ENCODE measurements at regions of chr13 and their contacts with region 1.

Region 1: GRCh38 chr13:97879646-97880310 is 73.7 kb upstream of the IPO5 start:
- DNase-seq: peak; percentile 72
- H3K4me3 ChIP-seq: no peak overlapping the region
- H3K27ac ChIP-seq: peak overlapping the region; percentile 91
- H3K4me1 ChIP-seq: peaks cover 14% of the 10 kb centered on the region
- H3K27me3 ChIP-seq: no peaks in the 10 kb centered on the region
- CTCF ChIP-seq: no peak
- POLR2A ChIP-seq: no peak

Region 2: GRCh38 chr13:97429681-97430081 is 450.1 kb before region 1 on chr13:
- CTCF ChIA-PET with region 1: no interaction called
- POLR2A ChIA-PET with region 1: no interaction called
- dilution Hi-C with region 1: no loop called
- intact Hi-C with region 1: no loop called
- DNase-seq: no peak
- H3K4me3 ChIP-seq: no peak overlapping the region
- H3K27ac ChIP-seq: no peak overlapping the region
- H3K4me1 ChIP-seq: peaks cover 5% of the 10 kb centered on the region
- H3K27me3 ChIP-seq: peaks cover 0 to 3% of the 10 kb centered on the region in 2 experiments
- CTCF ChIP-seq: no peak
- POLR2A ChIP-seq: no peak

Region 3: DNA sequence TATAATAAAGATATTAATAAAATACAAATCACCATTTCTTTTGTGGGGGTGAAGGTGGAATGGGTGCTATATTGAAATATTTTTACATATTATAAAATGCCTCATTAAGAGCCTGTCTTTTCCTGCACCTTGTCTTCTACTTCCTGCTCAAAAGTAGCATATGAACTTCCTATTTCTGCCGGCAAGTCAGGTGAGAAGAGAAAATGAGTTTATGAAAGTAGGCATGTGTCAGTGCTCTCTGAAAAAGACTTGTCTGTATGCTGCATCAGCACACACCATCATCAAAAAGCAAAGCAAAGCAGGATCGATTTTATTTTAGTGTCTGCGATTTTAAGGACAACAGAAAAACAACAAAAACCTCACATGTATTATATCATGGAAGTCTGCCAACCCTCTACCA is 331.6 kb before region 1 on chr13:
- CTCF ChIA-PET with region 1: no interaction called
- POLR2A ChIA-PET with region 1: no interaction called
- dilution Hi-C with region 1: no loop called
- intact Hi-C with region 1: no loop called
- DNase-seq: no peak
- H3K4me3 ChIP-seq: no peak overlapping the region
- H3K27ac ChIP-seq: no peak overlapping the region
- H3K4me1 ChIP-seq: no peaks in the 10 kb centered on the region
- H3K27me3 ChIP-seq: peaks cover 0 to 2% of the 10 kb centered on the region in 2 experiments
- CTCF ChIP-seq: no peak
- POLR2A ChIP-seq: no peak

Region 4: GRCh38 chr13:97911311-97912128 is 31.7 kb after region 1 on chr13:
- CTCF ChIA-PET with region 1: interaction called, 11 read pairs
- POLR2A ChIA-PET with region 1: no interaction called
- dilution Hi-C with region 1: no loop called
- intact Hi-C with region 1: no loop called
- DNase-seq: peak; percentile 14
- H3K4me3 ChIP-seq: no peak overlapping the region
- H3K27ac ChIP-seq: no peak overlapping the region
- H3K4me1 ChIP-seq: no peaks in the 10 kb centered on the region
- H3K27me3 ChIP-seq: no peaks in the 10 kb centered on the region
- CTCF ChIP-seq: peak; percentile 43 to 46
- POLR2A ChIP-seq: no peak

Region 5: DNA sequence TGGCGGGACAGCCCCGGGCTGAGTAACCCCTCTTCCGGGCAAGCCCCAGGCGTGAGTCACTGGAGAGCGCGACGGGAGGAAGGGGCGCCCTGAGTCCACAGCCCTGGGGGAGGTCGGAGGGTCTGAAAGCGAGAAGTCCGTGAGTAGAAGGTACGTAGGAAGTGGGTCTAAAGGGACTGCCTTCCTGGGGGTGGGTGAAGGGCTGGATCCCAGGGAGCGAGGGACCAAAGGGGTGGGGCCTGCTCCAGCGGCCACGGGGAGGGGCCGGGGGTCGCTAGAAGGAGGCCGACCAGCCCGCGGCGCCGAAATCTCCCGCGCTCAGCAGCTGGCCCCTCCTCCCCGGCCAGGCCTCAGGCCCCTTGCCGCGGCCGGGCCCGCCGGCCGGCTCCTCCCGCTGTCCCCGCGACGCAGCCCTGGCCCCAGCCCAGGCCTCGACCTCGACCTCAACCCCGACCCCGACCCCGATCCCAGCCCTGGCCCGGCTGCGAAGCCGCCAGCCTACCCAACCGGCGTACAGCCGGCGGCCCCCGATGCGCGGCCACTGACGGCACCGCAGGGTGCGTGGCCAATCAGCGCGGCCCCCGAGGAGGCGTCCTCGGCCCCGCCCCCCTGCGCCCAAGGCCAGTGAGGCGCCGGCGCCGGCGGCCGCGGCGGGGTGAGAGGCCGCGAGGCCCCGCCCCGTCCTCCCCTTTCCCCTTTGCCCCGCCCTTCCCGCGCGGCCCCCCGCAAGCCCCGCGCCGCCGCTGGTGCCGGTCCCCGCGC is 96.3 kb after region 1 on chr13:
- CTCF ChIA-PET with region 1: no interaction called
- POLR2A ChIA-PET with region 1: no interaction called
- dilution Hi-C with region 1: no loop called
- intact Hi-C with region 1: loop called (anchors 2 kb)
- DNase-seq: peak; percentile 85
- H3K4me3 ChIP-seq: peak overlapping the region; percentile 53 to 91 (median 66)
- H3K27ac ChIP-seq: peak overlapping the region; percentile 74
- H3K4me1 ChIP-seq: peaks cover 26% of the 10 kb centered on the region
- H3K27me3 ChIP-seq: no peaks in the 10 kb centered on the region
- CTCF ChIP-seq: no peak
- POLR2A ChIP-seq: peak; percentile 90

Measured in endothelial cell of umbilical vein (primary cell).